Lower lobe of right lung (tissue), 2 donors: ENCODE measurements at regions of chr4 and their contacts with region 1.

Region 1: GRCh38 chr4:89904524-89904923 is 9.9 kb downstream of the MMRN1 start:
- DNase-seq: no peak
- ATAC-seq: no peak
- H3K4me3 ChIP-seq: no peak overlapping the region
- H3K27ac ChIP-seq: no peak overlapping the region
- H3K4me1 ChIP-seq: no peaks in the 10 kb centered on the region
- H3K27me3 ChIP-seq: no peaks in the 10 kb centered on the region
- CTCF ChIP-seq: no peak

Region 2: GRCh38 chr4:89486042-89486441 is 418.5 kb before region 1 on chr4:
- intact Hi-C with region 1: loop called (anchors 5 kb)
- DNase-seq: no peak
- ATAC-seq: no peak
- H3K4me3 ChIP-seq: no peak overlapping the region
- H3K27ac ChIP-seq: no peak overlapping the region
- H3K4me1 ChIP-seq: no peaks in the 10 kb centered on the region
- H3K27me3 ChIP-seq: no peaks in the 10 kb centered on the region
- CTCF ChIP-seq: peak; percentile 15

Region 3: GRCh38 chr4:89625599-89626298 is 278.8 kb before region 1 on chr4:
- intact Hi-C with region 1: no loop called
- DNase-seq: no peak
- ATAC-seq: no peak
- H3K4me3 ChIP-seq: no peak overlapping the region
- H3K27ac ChIP-seq: no peak overlapping the region
- H3K4me1 ChIP-seq: no peaks in the 10 kb centered on the region
- H3K27me3 ChIP-seq: no peaks in the 10 kb centered on the region
- CTCF ChIP-seq: no peak

Region 4: DNA sequence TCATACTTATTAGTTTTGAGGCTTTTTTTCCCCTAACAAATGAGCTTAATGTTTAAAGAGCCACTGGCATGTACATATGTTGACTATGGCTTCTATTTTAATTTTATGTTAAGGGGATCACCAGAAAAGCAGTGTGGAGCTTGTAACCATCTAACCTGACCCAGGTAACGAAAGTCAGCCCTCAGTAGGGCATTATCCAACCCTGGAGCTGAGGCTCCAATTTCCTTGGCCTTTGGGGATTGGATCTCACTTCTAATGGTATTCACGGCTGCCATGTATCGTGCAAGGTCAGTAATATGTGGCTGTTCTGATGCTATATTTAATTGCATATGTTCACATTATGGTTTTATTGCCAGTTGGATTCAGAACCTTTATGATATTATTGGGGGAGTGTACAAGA is 147.5 kb after region 1 on chr4:
- intact Hi-C with region 1: no loop called
- DNase-seq: no peak
- ATAC-seq: no peak
- H3K4me3 ChIP-seq: no peak overlapping the region
- H3K27ac ChIP-seq: no peak overlapping the region
- H3K4me1 ChIP-seq: no peaks in the 10 kb centered on the region
- H3K27me3 ChIP-seq: no peaks in the 10 kb centered on the region
- CTCF ChIP-seq: no peak